Mammary epithelial cell (primary cell): ENCODE measurements at regions of chr4 and their contacts with region 1.

Region 1: GRCh38 chr4:184792950-184793555 is 32.7 kb downstream of the ACSL1 start:
- DNase-seq: peak; percentile 96
- H3K4me3 ChIP-seq: no peak overlapping the region
- H3K27ac ChIP-seq: peak overlapping the region; percentile 14
- H3K4me1 ChIP-seq: peaks cover 15% of the 10 kb centered on the region
- H3K27me3 ChIP-seq: no peaks in the 10 kb centered on the region
- CTCF ChIP-seq: no peak

Region 2: DNA sequence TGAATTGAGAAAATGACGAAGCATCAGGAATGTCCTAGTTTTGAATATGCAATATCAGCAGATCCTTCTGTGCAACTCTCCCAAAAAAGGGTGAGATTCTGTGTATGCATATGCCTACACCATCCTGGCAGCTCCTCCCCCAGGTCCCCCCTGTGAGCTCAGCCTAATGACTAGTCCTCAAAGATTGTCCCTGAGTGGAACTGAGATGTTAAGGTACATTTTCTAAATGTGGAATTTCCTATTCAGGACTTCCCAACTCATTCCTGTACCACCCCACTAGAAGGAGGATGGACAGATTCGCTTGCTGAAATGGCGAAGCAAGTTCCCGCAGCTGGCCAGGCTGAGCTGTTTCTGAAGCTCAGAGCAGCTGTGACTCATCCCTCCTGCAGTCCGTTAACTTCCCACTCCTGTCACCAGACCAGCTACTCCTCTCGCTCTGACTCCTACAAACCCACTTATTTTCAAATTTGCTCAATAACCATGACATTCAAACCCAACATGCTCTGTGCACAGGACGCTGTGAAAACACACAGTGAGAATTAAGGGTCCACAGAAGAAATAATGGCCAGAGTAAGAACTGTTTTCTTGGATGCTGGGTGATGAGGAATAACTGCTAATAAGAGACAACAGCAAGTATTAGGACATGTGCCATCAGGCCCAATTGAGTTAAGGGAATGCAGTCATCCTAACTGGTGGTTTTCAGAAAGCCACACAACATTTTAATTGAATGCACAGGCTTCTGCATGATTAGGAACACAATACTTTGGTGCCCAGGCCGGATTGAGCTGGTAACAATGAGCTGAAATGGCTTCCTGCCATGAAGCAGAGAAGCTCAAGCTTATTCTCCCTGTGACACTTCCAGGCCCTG is 278.7 kb before region 1 on chr4:
- CTCF ChIA-PET with region 1: no interaction called
- dilution Hi-C with region 1: no loop called
- in situ Hi-C with region 1: no loop called
- intact Hi-C with region 1: no loop called
- DNase-seq: peak; percentile 84
- H3K4me3 ChIP-seq: peak overlapping the region; percentile 4 to 27 (median 13)
- H3K27ac ChIP-seq: peak overlapping the region; percentile 35
- H3K4me1 ChIP-seq: peaks cover 26% of the 10 kb centered on the region
- H3K27me3 ChIP-seq: no peaks in the 10 kb centered on the region
- CTCF ChIP-seq: no peak

Region 3: GRCh38 chr4:184815046-184815877 is 22.2 kb after region 1 on chr4:
- CTCF ChIA-PET with region 1: no interaction called
- dilution Hi-C with region 1: no loop called
- in situ Hi-C with region 1: no loop called
- intact Hi-C with region 1: loop called (anchors 2 kb)
- DNase-seq: peak; percentile 96
- H3K4me3 ChIP-seq: peak overlapping the region; percentile 39 to 47 (median 46)
- H3K27ac ChIP-seq: peak overlapping the region; percentile 55
- H3K4me1 ChIP-seq: peaks cover 48% of the 10 kb centered on the region
- H3K27me3 ChIP-seq: no peaks in the 10 kb centered on the region
- CTCF ChIP-seq: no peak